Right ventricle myocardium superior (tissue), 1 donor: ENCODE measurements at regions of chr17 and their contacts with region 1.

Region 1: GRCh38 chr17:82320956-82321927 is 3.8 kb upstream of the CD7 start:
- DNase-seq: no peak
- ATAC-seq: peak; percentile 62

Region 2: GRCh38 chr17:81959362-81960129 is 361.7 kb before region 1 on chr17:
- intact Hi-C with region 1: no loop called
- DNase-seq: peak; percentile 87
- ATAC-seq: peak; percentile 96

Region 3: GRCh38 chr17:82153745-82154375 is 167.4 kb before region 1 on chr17:
- intact Hi-C with region 1: no loop called
- DNase-seq: peak; percentile 88
- ATAC-seq: peak; percentile 96

Region 4: DNA sequence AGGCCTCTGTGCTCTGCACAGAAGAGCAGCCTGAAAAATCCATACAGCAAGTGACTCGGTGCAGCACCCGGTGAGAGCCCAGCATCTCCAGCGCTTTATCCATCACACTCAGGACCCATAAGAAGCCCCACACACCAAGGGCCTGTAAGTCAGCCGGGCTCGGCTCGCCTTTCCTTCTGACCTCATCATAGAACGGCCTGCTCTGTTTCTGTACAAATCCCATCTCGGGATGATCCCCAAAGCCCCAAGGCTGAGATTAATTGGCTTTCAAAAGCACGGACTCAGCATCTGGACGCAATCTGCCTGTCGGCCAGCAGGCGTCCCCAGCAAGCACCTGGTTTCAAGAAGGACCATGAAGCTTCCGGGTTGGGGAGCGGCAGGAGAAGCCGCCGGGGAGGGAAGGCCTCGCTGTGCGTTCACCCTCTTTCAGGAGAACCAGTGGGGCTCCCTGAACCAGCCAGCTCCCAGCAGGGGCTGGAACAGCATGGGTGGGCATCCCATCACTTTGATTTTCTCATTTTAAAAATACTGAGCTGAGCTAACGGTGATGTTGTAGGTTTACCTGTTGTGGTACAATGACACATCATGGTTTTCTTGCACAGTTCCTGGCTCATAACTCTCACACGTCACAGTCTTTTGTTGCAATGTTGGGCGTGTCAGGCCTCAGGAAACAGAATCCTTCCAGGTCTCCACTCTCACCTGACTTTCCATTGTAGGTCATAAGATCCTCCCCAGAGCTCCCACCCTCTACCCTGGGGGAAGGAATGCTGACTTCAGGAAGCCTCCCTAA is 115.3 kb before region 1 on chr17:
- intact Hi-C with region 1: loop called (anchors 5 kb)
- DNase-seq: peak; percentile 92
- ATAC-seq: peak; percentile 93

Region 5: DNA sequence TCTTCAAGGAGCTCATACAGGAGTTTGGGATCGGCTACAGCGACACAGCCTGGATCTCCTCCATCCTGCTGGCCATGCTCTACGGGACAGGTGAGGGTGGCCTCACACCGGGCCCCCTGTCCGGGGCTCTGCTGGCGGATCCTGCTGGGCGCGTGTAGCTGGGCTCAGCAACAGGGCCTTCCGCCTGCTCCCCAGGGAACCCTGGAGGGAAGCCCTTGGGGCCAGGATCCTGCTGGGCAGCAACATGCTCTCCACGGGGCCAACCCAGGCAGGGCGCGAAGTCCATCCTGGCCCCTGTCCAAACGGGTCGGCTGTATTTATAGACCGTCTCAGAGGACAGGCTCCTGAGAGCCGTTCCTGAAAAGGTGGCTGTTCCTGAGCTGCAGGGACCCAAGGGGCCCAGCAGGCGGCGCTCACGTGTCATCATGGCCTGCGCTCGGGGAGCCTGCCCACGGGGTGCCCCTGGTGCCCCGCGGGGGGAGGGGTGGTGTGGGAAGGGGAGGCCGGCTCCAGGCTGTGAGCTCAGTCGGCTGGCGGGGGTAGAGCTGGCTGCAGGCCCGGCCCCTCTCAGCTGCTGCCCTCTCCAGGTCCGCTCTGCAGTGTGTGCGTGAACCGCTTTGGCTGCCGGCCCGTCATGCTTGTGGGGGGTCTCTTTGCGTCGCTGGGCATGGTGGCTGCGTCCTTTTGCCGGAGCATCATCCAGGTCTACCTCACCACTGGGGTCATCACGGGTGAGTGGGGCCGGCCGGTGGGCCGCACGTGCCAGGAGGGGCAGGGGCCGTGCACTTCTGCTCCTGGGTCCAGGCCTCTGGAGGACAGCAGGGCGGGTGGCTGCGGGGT is 84.9 kb before region 1 on chr17:
- intact Hi-C with region 1: loop called (anchors 5 kb)
- DNase-seq: peak; percentile 76
- ATAC-seq: peak; percentile 28

Region 6: GRCh38 chr17:82283208-82283749 is 38.0 kb before region 1 on chr17:
- intact Hi-C with region 1: no loop called
- DNase-seq: no peak
- ATAC-seq: no peak

Region 7: DNA sequence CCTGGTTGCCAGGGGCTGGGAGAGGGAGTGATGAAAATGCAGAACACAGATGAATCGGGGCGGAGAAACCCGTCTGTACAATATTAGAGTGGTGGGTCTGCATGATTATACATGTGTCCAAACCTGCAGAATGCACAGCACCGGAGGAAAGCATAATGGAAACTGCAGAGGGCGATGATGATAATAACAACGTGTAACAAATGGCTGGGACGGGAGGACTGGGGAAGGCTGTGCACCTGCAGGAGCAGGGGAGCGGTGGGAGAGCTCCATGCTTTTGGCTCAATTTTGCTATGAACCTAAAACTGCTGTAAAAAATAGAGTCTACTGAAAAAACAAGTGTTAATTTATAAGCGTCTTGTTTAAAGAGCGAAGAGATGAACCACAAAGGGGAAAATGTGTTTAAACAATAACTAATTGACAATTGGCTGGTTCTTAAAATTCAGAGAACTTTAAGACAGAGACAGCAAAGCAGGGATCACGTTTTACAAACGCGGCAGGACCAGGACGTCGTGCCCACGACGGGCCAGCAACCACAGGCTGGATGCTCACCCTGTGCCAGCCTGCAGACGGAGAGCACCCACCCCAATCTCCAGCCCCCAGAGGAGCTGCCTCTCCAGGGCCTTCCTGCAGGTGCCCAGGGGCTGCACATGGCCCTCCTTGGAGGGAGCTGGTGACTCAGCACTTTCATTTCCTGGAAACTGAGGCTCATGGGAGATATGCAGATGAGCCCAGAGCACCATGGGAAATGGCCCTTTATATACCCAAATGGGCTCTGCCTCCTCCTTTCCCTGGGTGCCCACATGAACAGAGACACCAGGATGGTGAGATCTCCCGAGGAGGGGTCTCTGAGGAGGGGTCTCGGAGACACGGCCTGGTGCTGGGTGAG is 37.5 kb after region 1 on chr17 and contains the start of gene TEX19:
- intact Hi-C with region 1: no loop called
- DNase-seq: no peak
- ATAC-seq: no peak
- total RNA-seq, gene TEX19: not detected